ENCODE measurements at regions of chr9 and their contacts with region 1.

Region 1: GRCh38 chr9:124257844-124258606 is at the start of gene NEK6:
- DNase-seq: peak; percentile 56
- ATAC-seq: peak; percentile 41
- H3K4me3 Mint-ChIP-seq: peak within 1 kb of the TSS; percentile 96
- H3K27ac Mint-ChIP-seq: peak within 1 kb of the TSS; percentile 94
- H3K4me1 Mint-ChIP-seq: peaks cover 87% of the 10 kb centered on the region
- H3K27me3 Mint-ChIP-seq: no peaks in the 10 kb centered on the region
- CTCF ChIP-seq: no peak
- total RNA-seq, gene NEK6: 110 and 115 TPM in 2 replicates

Region 2: GRCh38 chr9:124054582-124055227 is 203.3 kb before region 1 on chr9:
- CTCF ChIA-PET with region 1: no interaction called
- POLR2A ChIA-PET with region 1: no interaction called
- intact Hi-C with region 1: no loop called
- DNase-seq: no peak
- ATAC-seq: no peak
- H3K4me3 Mint-ChIP-seq: no peak overlapping the region
- H3K27ac Mint-ChIP-seq: no peak overlapping the region
- H3K4me1 Mint-ChIP-seq: no peaks in the 10 kb centered on the region
- H3K27me3 Mint-ChIP-seq: peaks cover 54% of the 10 kb centered on the region
- CTCF ChIP-seq: no peak

Region 3: GRCh38 chr9:124239249-124240073 is 18.6 kb before region 1 on chr9:
- CTCF ChIA-PET with region 1: no interaction called
- POLR2A ChIA-PET with region 1: interaction called, 5 read pairs
- intact Hi-C with region 1: loop called (anchors 2 kb)
- DNase-seq: no peak
- ATAC-seq: peak; percentile 97
- H3K4me3 Mint-ChIP-seq: peak overlapping the region; percentile 48
- H3K27ac Mint-ChIP-seq: peak overlapping the region; percentile 86
- H3K4me1 Mint-ChIP-seq: peaks cover 53% of the 10 kb centered on the region
- H3K27me3 Mint-ChIP-seq: no peaks in the 10 kb centered on the region
- CTCF ChIP-seq: no peak

Region 4: GRCh38 chr9:124280176-124280691 is 22.2 kb after region 1 on chr9:
- CTCF ChIA-PET with region 1: no interaction called
- POLR2A ChIA-PET with region 1: no interaction called
- intact Hi-C with region 1: no loop called
- DNase-seq: no peak
- ATAC-seq: no peak
- H3K4me3 Mint-ChIP-seq: no peak overlapping the region
- H3K27ac Mint-ChIP-seq: peak overlapping the region; percentile 65
- H3K4me1 Mint-ChIP-seq: peaks cover 87% of the 10 kb centered on the region
- H3K27me3 Mint-ChIP-seq: no peaks in the 10 kb centered on the region
- CTCF ChIP-seq: no peak

Region 5: GRCh38 chr9:124325816-124326215 is 67.8 kb after region 1 on chr9:
- CTCF ChIA-PET with region 1: no interaction called
- POLR2A ChIA-PET with region 1: interaction called, 3 read pairs
- intact Hi-C with region 1: loop called (anchors 2 kb)
- DNase-seq: no peak
- ATAC-seq: no peak
- H3K4me3 Mint-ChIP-seq: no peak overlapping the region
- H3K27ac Mint-ChIP-seq: peak overlapping the region; percentile 68
- H3K4me1 Mint-ChIP-seq: peaks cover 26% of the 10 kb centered on the region
- H3K27me3 Mint-ChIP-seq: no peaks in the 10 kb centered on the region
- CTCF ChIP-seq: no peak

Region 6: DNA sequence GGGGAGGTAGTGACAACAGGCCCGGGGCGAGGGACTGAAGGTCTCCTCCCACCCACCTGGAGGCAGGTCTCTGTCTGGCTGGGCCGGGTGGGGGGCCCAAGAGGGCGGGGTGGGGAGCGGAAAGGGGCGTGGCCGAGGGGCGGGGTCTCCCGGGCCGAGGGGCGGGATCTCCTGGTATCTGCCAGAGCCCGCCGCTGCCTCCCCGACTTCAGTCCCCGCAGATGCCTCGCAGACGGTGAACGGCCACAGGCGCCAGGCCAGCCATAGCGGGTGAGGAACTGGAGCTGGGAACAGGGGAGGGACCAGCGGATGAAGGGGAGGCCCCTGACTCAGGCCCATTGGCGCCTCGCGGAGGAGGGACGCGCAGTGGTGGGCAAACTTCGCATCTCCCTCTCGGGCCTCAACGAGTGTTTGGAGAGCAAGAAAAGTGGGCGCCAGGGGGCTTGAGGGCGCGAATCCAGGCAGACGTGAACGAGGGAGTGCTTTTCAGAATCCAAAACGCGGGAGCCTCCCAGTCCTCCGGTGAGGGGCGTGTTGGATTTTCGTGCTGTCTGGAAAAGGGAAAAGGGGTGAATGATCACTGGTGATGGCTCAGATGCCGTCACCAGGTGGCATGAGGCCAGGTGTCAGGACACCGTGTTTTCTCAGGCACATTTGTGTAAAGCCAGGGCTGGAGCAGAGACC is 192.4 kb after region 1 on chr9 and contains the start of gene ADGRD2:
- CTCF ChIA-PET with region 1: no interaction called
- POLR2A ChIA-PET with region 1: no interaction called
- intact Hi-C with region 1: no loop called
- DNase-seq: no peak
- ATAC-seq: no peak
- H3K4me3 Mint-ChIP-seq: no peak within 1 kb of the TSS
- H3K27ac Mint-ChIP-seq: no peak within 1 kb of the TSS
- H3K4me1 Mint-ChIP-seq: no peaks in the 10 kb centered on the region
- H3K27me3 Mint-ChIP-seq: peaks cover 44% of the 10 kb centered on the region
- CTCF ChIP-seq: no peak
- total RNA-seq, gene ADGRD2: not detected in 2 replicates

Region 7: DNA sequence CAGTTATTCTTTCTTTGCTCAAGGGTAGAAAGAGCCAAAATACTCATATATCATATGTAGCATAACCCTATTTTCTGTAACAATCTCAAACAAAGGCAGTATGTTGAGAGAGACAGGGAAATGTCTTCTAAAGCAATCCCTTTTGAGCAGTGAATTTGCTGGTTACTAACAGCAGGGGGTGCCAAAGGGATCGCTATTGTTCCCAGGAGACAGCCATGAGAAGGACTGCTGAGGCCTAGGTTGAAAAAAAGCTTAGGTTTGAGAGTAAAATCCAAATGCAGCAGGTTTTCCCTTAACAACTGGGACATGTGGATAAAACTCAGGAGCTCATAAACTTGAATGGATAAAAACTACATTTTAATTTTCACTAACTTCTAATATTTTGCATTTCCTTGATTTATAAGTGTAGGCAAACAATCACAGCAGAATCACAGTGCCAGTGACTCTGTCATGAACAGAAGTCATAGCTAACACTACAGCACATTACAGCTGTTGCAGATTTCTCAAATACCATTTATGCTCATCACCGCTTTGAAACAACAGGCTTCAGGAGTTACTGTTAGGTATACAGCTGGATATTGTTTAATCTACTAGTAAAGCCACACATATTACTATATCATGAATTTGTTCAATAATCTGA is 1300.5 kb after region 1 on chr9:
- CTCF ChIA-PET with region 1: no interaction called
- POLR2A ChIA-PET with region 1: no interaction called
- intact Hi-C with region 1: no loop called
- DNase-seq: no peak
- ATAC-seq: peak; percentile 83
- H3K4me3 Mint-ChIP-seq: no peak overlapping the region
- H3K27ac Mint-ChIP-seq: no peak overlapping the region
- H3K4me1 Mint-ChIP-seq: peaks cover 26% of the 10 kb centered on the region
- H3K27me3 Mint-ChIP-seq: no peaks in the 10 kb centered on the region
- CTCF ChIP-seq: no peak

Measured in activated B cell treated with CpG ODN at 0.5 μM for 24 hours (primary cell).